H1 (cell line): ENCODE measurements at regions of chr10 and their contacts with region 1.

Region 1: GRCh38 chr10:114437456-114438292 is 33.4 kb upstream of the AFAP1L2 start:
- DNase-seq: no peak
- H3K4me3 ChIP-seq: no peak overlapping the region
- H3K27ac ChIP-seq: no peak overlapping the region
- H3K4me1 ChIP-seq: no peaks in the 10 kb centered on the region
- H3K27me3 ChIP-seq: no peaks in the 10 kb centered on the region
- CTCF ChIP-seq: peak in 2 of 3 experiments; percentile 31 to 47; a peak in 2 of 4 replicates
- EP300 ChIP-seq: no peak
- POLR2A ChIP-seq: no peak
- RAD21 ChIP-seq: peak; percentile 49 to 57

Region 2: DNA sequence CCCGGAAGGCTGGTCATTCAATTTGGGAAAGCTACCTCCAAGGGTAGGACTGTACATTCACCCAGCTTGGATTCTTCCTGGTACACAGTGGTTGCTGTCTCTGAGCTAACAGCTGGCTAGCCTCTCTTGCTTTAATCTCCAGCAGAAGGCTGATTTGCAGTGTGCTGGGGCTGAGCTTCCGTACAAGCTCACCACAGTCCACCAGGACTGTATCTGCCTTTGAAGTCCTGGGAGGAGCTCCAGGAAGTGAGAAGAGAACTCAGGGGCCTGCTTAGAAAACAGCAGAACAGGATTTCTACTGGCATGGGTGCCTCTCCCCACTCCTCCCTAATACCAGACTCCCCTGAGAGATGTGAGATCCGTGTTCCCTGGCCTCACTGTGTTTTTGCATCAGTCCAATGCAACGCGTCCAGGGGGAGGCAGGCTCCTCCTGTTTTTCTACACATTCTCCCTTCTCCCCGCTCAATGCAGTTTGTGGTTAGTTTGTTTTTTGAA is 40.0 kb before region 1 on chr10:
- CTCF ChIA-PET with region 1: interaction called, 11 read pairs
- POLR2A ChIA-PET with region 1: no interaction called
- DNase-seq: no peak
- H3K4me3 ChIP-seq: no peak overlapping the region
- H3K27ac ChIP-seq: no peak overlapping the region
- H3K4me1 ChIP-seq: peaks cover 3 to 10% (median 8%) of the 10 kb centered on the region in 4 experiments; a peak in 6 of 7 replicates
- H3K27me3 ChIP-seq: no peaks in the 10 kb centered on the region; a peak in 2 of 7 replicates
- CTCF ChIP-seq: no peak
- EP300 ChIP-seq: no peak
- POLR2A ChIP-seq: no peak
- RAD21 ChIP-seq: no peak

Region 3: DNA sequence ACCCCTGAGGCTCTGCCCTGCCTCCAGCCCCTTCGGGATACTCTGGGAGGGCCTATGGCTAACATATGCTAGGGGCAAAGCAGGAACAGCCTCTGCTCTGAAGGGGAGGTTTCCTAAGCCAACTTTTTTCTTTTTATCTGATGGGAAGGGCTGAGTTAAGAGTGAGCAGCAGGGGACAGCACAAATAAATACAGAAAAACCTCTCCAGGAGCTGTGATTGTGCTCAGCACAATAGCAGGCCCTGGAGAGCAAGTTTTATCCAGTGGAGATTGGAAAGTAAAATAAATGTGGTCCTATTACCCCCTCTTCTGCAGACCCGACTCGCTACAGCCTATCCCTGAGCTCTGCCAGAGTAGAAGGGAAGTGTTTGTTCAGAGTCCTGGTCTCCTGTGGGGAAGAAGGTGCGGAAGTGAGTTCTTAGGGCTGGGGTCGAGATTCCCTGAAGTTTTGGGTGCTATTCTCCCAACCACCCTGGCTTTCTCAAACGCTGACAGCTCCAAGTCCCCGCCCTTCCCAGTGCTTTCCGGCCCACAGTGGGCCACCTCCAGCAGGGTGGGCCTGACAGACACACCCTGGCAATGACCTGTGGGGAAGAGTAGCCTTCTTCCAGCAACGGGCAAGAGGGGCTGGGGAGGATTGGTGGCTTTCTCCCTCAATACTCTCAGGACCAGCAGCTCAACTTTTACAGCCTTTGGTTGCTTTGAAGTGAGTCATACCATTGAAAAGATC is 10.4 kb before region 1 on chr10:
- CTCF ChIA-PET with region 1: interaction called, 15 read pairs
- POLR2A ChIA-PET with region 1: interaction called, 3 read pairs
- DNase-seq: no peak
- H3K4me3 ChIP-seq: no peak overlapping the region
- H3K27ac ChIP-seq: no peak overlapping the region
- H3K4me1 ChIP-seq: peaks cover 0 to 5% (median 0%) of the 10 kb centered on the region in 4 experiments; a peak in 1 of 7 replicates
- H3K27me3 ChIP-seq: no peaks in the 10 kb centered on the region; a peak in 1 of 7 replicates
- CTCF ChIP-seq: no peak
- EP300 ChIP-seq: no peak
- POLR2A ChIP-seq: no peak
- RAD21 ChIP-seq: peak; percentile 39 to 40; a peak in 3 of 4 replicates

Region 4: DNA sequence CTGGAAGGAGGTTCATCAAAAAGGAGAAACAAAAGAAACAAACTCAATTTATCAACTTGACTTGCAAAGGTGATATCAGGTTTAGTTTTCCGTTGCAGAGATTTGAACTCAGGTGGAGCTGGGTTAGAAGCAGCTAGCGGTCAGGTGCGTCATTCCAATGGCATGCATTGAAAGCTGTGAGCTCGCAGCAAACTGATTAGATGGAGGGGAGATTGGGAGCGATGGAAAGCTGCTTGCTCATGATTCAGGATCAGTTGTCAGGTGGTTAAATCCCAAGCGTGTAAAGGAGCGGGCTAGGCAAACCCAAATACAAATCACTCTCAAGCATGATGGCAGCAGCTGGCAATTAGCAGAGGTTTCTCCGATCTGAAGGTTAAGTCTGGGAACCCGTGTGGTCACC is 15.9 kb after region 1 on chr10:
- CTCF ChIA-PET with region 1: interaction called, 18 read pairs
- POLR2A ChIA-PET with region 1: interaction called, 3 read pairs
- DNase-seq: no peak
- H3K4me3 ChIP-seq: no peak overlapping the region
- H3K27ac ChIP-seq: no peak overlapping the region
- H3K4me1 ChIP-seq: peaks cover 0 to 2% (median under 1%) of the 10 kb centered on the region in 4 experiments; a peak in 2 of 7 replicates
- H3K27me3 ChIP-seq: no peaks in the 10 kb centered on the region
- CTCF ChIP-seq: no peak
- EP300 ChIP-seq: no peak
- POLR2A ChIP-seq: no peak
- RAD21 ChIP-seq: no peak